Tibial artery (tissue), 4 donors: ENCODE measurements at regions of chr2 and their contacts with region 1.

Region 1: GRCh38 chr2:135948642-135949355 is 36.6 kb downstream of the DARS1 start:
- DNase-seq: no peak
- H3K4me3 ChIP-seq: no peak overlapping the region
- H3K27ac ChIP-seq: no peak overlapping the region
- H3K4me1 ChIP-seq: peaks cover 0 to 22% (median 1%) of the 10 kb centered on the region in 4 donors
- H3K27me3 ChIP-seq: no peaks in the 10 kb centered on the region
- CTCF ChIP-seq: no peak

Region 2: GRCh38 chr2:135657806-135658582 is 290.8 kb before region 1 on chr2:
- intact Hi-C with region 1: loop called (anchors 5 kb)
- DNase-seq: no peak
- H3K4me3 ChIP-seq: no peak overlapping the region
- H3K27ac ChIP-seq: no peak overlapping the region
- H3K4me1 ChIP-seq: no peaks in the 10 kb centered on the region
- H3K27me3 ChIP-seq: no peaks in the 10 kb centered on the region
- CTCF ChIP-seq: no peak

Region 3: DNA sequence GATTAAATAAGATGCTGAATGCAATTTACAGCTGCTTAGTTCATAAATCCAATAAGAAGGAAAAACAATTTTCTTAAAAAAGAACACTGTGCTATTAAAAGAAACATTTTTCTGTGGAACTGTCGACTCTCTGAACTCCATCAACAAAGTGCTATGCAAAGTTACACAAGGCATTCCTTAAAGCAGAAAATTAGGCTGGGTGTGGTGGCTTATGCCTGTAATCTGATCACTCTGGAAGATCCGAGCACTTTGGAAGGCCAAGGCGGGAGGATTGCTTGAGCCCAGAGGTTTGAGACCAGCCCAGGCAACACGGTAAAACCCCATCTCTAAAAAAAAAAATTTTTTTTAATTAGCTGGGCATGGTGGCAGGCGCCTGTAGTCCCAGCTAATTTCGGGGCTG is 85.6 kb before region 1 on chr2:
- intact Hi-C with region 1: no loop called
- DNase-seq: no peak
- H3K4me3 ChIP-seq: no peak overlapping the region
- H3K27ac ChIP-seq: peak overlapping the region in 1 of 2 donors; percentile 23
- H3K4me1 ChIP-seq: peaks cover 0 to 4% (median 0%) of the 10 kb centered on the region in 4 donors
- H3K27me3 ChIP-seq: no peaks in the 10 kb centered on the region
- CTCF ChIP-seq: no peak